ENCODE measurements at regions of chr3 and their contacts with region 1.

Region 1: GRCh38 chr3:132722164-132723024 is at the start of gene NPHP3:
- DNase-seq: peak; percentile 82 to 97
- ATAC-seq: peak; percentile 78 to 92 (median 80)
- H3K4me3 ChIP-seq: peak within 1 kb of the TSS; percentile 68
- H3K4me3 Mint-ChIP-seq: peak within 1 kb of the TSS; percentile 91
- H3K27ac ChIP-seq: peak within 1 kb of the TSS; percentile 49
- H3K27ac Mint-ChIP-seq: peak within 1 kb of the TSS; percentile 59 to 82
- H3K4me1 ChIP-seq: peaks cover 19% of the 10 kb centered on the region
- H3K4me1 Mint-ChIP-seq: peaks cover 20 to 29% of the 10 kb centered on the region in 2 donors
- H3K27me3 ChIP-seq: no peaks in the 10 kb centered on the region
- H3K27me3 Mint-ChIP-seq: peaks cover 0 to 4% of the 10 kb centered on the region in 2 donors
- CTCF ChIP-seq: no peak
- total RNA-seq, gene NPHP3: 17.9 to 20.1 (median 20.0) TPM

Region 2: GRCh38 chr3:131381444-131382291 is 1340.7 kb before region 1 on chr3 and contains the start of gene NUDT16:
- intact Hi-C with region 1: loop called (anchors 10 kb)
- DNase-seq: peak; percentile 94 to 96
- ATAC-seq: peak; percentile 97 to 100 (median 97)
- H3K4me3 ChIP-seq: peak within 1 kb of the TSS; percentile 67
- H3K4me3 Mint-ChIP-seq: peak within 1 kb of the TSS; percentile 95
- H3K27ac ChIP-seq: peak within 1 kb of the TSS; percentile 51
- H3K27ac Mint-ChIP-seq: peak within 1 kb of the TSS; percentile 88 to 97
- H3K4me1 ChIP-seq: peaks cover 25% of the 10 kb centered on the region
- H3K4me1 Mint-ChIP-seq: peaks cover 30 to 40% of the 10 kb centered on the region in 2 donors
- H3K27me3 ChIP-seq: no peaks in the 10 kb centered on the region
- H3K27me3 Mint-ChIP-seq: no peaks in the 10 kb centered on the region
- CTCF ChIP-seq: no peak
- total RNA-seq, gene NUDT16: 9.0 to 10.7 (median 9.7) TPM

Region 3: DNA sequence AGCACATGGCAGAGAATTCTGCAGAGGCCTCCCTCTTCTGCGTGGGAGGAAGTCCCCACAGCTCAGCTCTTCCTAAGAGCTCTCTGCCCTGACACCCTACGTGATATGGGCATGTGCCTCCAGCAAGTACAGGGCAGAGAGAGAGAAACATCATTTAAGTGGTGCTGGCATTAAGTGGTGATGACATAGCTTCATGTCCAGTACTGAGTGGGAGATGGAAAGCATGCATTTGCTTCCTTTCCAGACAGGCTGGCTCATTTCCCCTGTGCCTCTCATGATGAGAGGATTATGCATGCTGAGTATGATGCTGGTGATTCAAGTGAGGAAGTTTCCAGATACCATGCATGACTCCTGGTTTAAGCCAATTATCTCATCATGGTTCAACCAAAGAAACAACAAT is 704.3 kb after region 1 on chr3:
- intact Hi-C with region 1: loop called (anchors 1 kb)
- DNase-seq: no peak
- ATAC-seq: no peak
- H3K4me3 ChIP-seq: no peak overlapping the region
- H3K4me3 Mint-ChIP-seq: no peak overlapping the region
- H3K27ac ChIP-seq: no peak overlapping the region
- H3K27ac Mint-ChIP-seq: no peak overlapping the region
- H3K4me1 ChIP-seq: peaks cover 5% of the 10 kb centered on the region
- H3K4me1 Mint-ChIP-seq: no peaks in the 10 kb centered on the region
- H3K27me3 ChIP-seq: no peaks in the 10 kb centered on the region
- H3K27me3 Mint-ChIP-seq: peaks cover 0 to 5% of the 10 kb centered on the region in 2 donors
- CTCF ChIP-seq: no peak

Region 4: DNA sequence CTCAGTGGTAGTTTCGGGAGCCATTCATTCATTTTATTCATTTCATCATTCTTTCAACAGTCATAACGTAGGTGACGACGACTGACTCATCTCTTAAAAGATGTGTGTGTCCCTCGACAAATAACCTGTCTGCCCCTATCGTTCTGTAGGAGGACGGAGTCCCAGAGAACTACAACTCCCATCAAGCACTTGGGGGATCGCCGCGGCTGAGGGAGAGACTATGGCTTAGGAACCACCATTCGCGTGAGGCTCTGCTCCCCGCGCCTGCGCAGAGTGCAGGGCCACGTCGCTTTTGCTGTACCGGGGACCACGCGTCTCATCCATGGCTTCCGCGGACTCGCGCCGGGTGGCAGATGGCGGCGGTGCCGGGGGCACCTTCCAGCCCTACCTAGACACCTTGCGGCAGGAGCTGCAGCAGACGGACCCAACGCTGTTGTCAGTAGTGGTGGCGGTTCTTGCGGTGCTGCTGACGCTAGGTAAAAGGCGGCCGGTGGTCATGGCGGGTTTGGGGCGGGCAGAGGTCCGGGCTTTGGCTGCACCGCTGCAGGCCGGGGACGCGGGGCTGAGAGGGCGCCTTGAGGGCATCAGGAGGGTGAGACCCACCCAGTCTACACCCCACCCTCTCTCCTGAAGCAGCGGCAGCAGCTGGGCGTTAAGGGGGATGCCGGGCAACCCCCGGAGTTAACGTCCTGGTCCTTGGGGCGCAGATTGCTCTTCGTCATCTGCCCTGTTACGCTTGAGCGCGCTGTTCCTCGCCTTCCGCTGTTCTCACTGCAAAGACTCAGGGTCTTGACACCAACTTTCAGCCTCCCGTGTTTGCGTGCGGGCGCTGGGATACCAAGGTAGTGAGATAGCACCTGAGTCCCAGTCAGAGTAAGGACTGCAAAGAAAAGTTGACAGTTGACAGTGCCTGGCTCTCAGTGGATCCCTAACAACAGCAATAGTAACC is 1083.4 kb after region 1 on chr3 and contains the start of gene SRPRB:
- intact Hi-C with region 1: loop called (anchors 10 kb)
- DNase-seq: peak; percentile 87 to 98
- ATAC-seq: peak; percentile 95 to 98 (median 97)
- H3K4me3 ChIP-seq: peak within 1 kb of the TSS; percentile 89
- H3K4me3 Mint-ChIP-seq: peak within 1 kb of the TSS; percentile 95
- H3K27ac ChIP-seq: peak within 1 kb of the TSS; percentile 76
- H3K27ac Mint-ChIP-seq: peak within 1 kb of the TSS; percentile 90 to 96
- H3K4me1 ChIP-seq: peaks cover 9% of the 10 kb centered on the region
- H3K4me1 Mint-ChIP-seq: peaks cover 15 to 17% of the 10 kb centered on the region in 2 donors
- H3K27me3 ChIP-seq: no peaks in the 10 kb centered on the region
- H3K27me3 Mint-ChIP-seq: peaks cover 18 to 25% of the 10 kb centered on the region in 2 donors
- CTCF ChIP-seq: no peak
- total RNA-seq, gene SRPRB: 19.8 to 26.4 (median 22.4) TPM

Region 5: DNA sequence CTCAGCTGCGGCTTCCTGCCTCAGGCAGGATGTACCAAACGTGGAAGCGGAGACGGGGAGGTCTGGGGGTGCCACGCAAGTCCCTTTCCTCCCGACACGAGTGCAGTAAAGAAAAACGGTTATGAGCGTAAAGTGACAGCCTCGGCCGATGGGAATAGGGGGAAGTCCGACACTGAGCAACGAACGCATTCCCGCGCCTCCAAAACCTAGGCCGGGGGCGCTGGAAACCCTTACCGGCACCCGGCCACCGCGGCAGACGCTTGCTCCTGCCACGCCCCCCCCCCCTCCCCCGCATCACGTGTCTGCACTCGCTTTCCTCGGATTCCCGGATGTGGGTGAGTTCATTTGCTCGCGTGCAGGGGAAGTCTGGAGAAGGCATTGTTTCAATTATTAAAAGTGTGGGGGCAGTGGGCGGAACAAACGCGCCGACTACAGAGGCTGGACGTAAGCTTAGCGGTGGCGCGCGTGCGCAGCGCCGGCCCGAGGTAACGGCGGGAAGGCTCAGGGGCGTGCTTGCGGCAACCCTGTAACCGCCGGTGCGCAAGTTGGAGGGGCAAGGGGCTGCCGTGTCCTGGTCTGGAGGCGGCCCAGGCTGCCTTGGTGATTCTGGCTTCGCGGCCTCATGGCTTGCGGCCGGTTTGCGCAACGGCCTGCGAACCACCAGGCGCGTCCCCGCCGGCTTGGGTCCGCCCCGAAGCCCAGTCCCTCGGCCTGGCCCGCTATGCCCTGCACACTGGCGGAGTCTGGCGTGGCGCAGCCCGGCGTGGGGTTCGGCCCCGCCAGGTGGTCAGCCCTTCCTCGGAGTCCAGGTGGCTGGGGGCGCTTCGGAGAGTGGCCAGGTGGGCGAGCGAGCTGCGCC is 1763.6 kb after region 1 on chr3 and contains the starts of genes ANAPC13 and CEP63:
- intact Hi-C with region 1: loop called (anchors 5 kb)
- DNase-seq: peak; percentile 91 to 98
- ATAC-seq: peak; percentile 79 to 92 (median 84)
- H3K4me3 ChIP-seq: peak within 1 kb of the TSS; percentile 86
- H3K4me3 Mint-ChIP-seq: peak within 1 kb of the TSS; percentile 99
- H3K27ac ChIP-seq: peak within 1 kb of the TSS; percentile 95
- H3K27ac Mint-ChIP-seq: peak within 1 kb of the TSS; percentile 98 to 99
- H3K4me1 ChIP-seq: peaks cover 23% of the 10 kb centered on the region
- H3K4me1 Mint-ChIP-seq: peaks cover 41 to 53% of the 10 kb centered on the region in 2 donors
- H3K27me3 ChIP-seq: no peaks in the 10 kb centered on the region
- H3K27me3 Mint-ChIP-seq: no peaks in the 10 kb centered on the region
- CTCF ChIP-seq: no peak
- total RNA-seq, gene ANAPC13: 16.1 to 20.4 (median 16.6) TPM
- total RNA-seq, gene CEP63: 17.9 to 25.7 (median 19.5) TPM